ENCODE measurements at regions of chr5 and their contacts with region 1.

Region 1: DNA sequence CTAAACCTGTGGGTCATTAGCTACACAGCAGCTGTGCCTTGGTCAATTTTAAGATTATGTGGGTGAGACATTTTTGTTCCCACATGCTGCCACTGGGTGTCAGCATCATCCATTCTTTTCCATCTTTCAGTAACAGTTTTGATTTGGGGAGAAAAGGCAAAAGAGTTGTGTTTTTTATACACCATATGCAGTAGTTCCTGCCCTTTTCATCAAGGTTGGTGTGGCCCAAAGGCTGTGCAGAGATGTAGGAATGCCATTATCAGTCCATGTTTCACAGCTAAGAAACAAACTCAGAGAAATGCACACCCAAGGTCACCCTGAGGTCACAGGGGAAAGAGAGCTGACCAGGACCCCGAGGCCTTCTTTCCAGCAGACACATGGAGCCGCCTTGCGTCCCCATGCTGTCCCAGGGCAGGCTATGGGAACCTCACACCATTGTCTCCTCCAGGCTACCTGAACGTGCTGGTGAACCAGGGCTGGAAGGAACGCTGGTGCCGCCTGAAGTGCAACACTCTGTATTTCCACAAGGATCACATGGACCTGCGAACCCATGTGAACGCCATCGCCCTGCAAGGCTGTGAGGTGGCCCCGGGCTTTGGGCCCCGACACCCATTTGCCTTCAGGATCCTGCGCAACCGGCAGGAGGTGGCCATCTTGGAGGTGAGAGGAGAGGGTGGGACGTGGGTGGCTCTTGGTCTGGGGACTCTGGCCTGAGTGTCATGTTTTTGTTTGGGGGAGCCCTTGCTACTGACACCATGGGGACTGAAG is 27.8 kb upstream of the GRPEL2 start:
- DNase-seq: no peak
- ATAC-seq: peak; percentile 52 to 62 (median 58)
- H3K4me3 ChIP-seq: no peak overlapping the region
- H3K27ac ChIP-seq: no peak overlapping the region
- H3K4me1 ChIP-seq: peaks cover 0 to 10% (median 3%) of the 10 kb centered on the region in 4 donors
- H3K27me3 ChIP-seq: no peaks in the 10 kb centered on the region
- CTCF ChIP-seq: peak; percentile 57 to 90 (median 70)
- POLR2A ChIP-seq: no peak

Region 2: DNA sequence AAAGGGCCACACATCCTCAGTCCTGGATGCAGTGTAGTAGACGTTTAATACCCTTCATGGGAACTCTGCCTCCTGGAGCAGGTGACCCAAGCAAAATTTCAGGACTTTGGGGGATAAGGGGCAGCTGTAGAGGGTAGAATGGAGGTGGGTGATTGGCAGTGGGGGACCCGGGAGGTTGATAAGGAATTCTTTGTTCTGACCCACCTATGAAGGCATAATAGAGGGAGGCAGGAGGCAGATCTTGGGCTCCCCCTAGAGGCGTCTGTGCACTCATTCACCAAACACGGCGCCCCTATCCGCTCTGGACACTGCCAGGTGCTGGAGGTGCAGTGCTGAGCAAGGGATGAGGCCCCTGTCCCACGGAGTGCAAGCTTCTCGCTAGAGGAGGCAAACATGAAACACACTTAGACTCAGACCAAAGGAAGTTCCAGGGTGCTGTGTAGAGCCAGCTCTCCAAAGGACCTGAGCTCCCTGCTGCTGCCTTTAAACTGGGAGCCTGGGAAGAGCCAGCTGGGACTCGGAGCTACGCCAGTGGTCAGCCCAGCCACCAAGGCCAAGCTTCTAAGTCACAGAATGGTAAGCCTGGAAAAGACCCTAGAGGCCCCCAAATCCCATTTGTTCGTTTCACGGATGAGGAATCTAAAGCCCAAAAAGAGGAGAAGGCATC is 54.0 kb after region 1 on chr5:
- intact Hi-C with region 1: loop called (anchors 5 kb)
- DNase-seq: peak; percentile 69 to 74 (median 70)
- ATAC-seq: peak; percentile 87 to 89 (median 88)
- H3K4me3 ChIP-seq: no peak overlapping the region
- H3K27ac ChIP-seq: no peak overlapping the region
- H3K4me1 ChIP-seq: no peaks in the 10 kb centered on the region
- H3K27me3 ChIP-seq: no peaks in the 10 kb centered on the region
- CTCF ChIP-seq: peak; percentile 59 to 81 (median 77)
- POLR2A ChIP-seq: no peak